ENCODE measurements at regions of chr12 and their contacts with region 1.

Region 1: DNA sequence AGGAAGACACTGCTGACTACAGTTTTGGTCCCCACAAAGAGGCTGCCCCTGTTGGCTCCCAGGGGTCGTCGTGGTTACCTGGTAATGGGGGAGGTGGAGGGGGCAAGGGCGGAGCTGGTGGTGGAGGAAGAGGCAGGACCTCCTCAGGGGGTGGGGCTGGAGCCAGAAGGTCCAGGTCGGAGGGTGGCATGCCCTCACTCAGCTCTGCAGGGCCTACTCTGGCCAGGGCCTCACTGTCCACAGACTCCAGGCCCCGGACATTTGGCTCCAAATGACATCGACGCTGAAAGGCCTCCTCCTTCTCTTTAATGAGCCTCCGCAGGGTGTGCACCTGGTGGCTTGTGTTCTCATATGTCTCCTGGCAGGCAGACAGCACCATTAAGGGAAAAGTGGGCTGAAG is 28.5 kb downstream of the PRPF40B start:
- DNase-seq: no peak
- CTCF ChIP-seq: no peak

Region 2: DNA sequence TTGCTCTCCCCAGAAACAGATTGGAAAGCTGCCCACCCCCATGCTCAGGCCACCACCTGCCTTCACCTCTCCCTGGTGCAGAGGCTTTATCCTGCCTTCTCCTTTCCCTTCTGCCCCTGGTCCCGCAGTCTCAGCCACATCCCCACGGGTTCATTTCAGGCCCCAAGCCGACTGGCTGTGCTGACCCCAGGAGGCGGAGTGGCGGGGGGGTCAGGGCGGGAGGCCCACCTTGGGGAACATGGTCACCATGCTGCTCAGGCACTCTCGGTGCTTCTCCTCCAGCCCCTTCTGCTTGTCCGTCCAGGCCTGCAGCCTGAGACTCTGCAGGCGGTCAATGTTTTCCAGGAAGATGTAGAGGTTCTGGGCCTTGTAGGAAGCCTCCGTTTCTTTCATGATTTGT is 53.3 kb before region 1 on chr12:
- in situ Hi-C with region 1: no loop called
- DNase-seq: no peak
- CTCF ChIP-seq: no peak

Region 3: GRCh38 chr12:49703647-49704137 is 51.8 kb after region 1 on chr12:
- in situ Hi-C with region 1: loop called (anchors 5 kb)
- DNase-seq: peak; percentile 65
- CTCF ChIP-seq: no peak

Measured in GM13977 (cell line).